Mammary epithelial cell (primary cell): ENCODE measurements at regions of chr9 and their contacts with region 1.

Region 1: GRCh38 chr9:136944519-136945279 is at the starts of genes C8G and FBXW5:
- DNase-seq: peak; percentile 90
- H3K4me3 ChIP-seq: peak within 1 kb of the TSS; percentile 68 to 83 (median 77)
- H3K27ac ChIP-seq: peak within 1 kb of the TSS; percentile 59
- H3K4me1 ChIP-seq: peaks cover 13% of the 10 kb centered on the region
- H3K27me3 ChIP-seq: no peaks in the 10 kb centered on the region
- CTCF ChIP-seq: peak; percentile 78 to 98
- total RNA-seq, gene C8G: 0.50 to 2.8 TPM
- total RNA-seq, gene FBXW5: 79.7 to 107 TPM

Region 2: DNA sequence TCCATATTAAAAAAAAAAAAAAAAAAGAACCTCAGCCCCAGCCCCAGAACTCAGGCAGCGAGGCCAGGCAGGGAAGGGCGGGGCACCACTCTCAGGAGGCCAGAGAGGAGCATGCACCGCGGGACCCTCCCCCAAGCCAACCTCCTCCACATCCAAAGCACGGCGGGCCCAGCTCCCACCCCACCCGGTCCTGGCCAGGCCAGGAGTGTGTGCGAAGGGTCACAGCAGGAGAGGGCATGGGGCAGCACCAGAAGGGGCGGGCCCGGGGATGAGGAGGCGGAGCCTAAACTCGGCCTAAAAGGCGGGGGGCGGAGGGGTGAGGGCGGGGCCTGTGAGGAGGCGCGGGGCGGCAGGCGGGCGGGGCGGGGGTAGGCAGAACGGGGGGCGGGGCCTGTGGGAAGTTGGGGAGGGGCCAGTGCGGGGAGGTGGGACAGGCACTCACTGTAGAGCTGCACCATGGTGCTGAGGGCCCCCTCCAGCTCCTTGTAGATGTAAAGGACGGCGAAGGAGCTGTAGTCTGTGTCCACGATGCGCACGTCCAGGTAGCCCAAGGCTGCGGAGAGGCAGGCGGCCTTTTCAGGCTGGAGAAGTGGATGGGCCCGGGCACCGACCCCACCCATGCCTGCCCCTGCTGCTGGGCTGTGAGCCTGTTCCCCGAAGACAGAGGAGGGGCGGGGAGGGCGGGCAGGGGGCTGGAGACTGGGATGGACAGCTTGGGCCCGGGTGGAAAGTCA is 181.6 kb before region 1 on chr9:
- CTCF ChIA-PET with region 1: no interaction called
- dilution Hi-C with region 1: no loop called
- in situ Hi-C with region 1: no loop called
- intact Hi-C with region 1: no loop called
- DNase-seq: no peak
- H3K4me3 ChIP-seq: no peak overlapping the region
- H3K27ac ChIP-seq: no peak overlapping the region
- H3K4me1 ChIP-seq: peaks cover 10% of the 10 kb centered on the region
- H3K27me3 ChIP-seq: peaks cover 2% of the 10 kb centered on the region
- CTCF ChIP-seq: no peak

Region 3: GRCh38 chr9:136849038-136849959 is 95.4 kb before region 1 on chr9 and contains the start of gene PHPT1:
- CTCF ChIA-PET with region 1: no interaction called
- dilution Hi-C with region 1: no loop called
- in situ Hi-C with region 1: no loop called
- intact Hi-C with region 1: loop called (anchors 2 kb)
- DNase-seq: peak; percentile 98
- H3K4me3 ChIP-seq: peak within 1 kb of the TSS; percentile 82 to 93 (median 92)
- H3K27ac ChIP-seq: peak within 1 kb of the TSS; percentile 67
- H3K4me1 ChIP-seq: peaks cover 19% of the 10 kb centered on the region
- H3K27me3 ChIP-seq: peaks cover 22% of the 10 kb centered on the region
- CTCF ChIP-seq: no peak
- total RNA-seq, gene PHPT1: 55.3 to 143 TPM

Region 4: GRCh38 chr9:136885950-136886578 is 58.6 kb before region 1 on chr9 and contains the start of gene TRAF2:
- CTCF ChIA-PET with region 1: no interaction called
- dilution Hi-C with region 1: no loop called
- in situ Hi-C with region 1: no loop called
- intact Hi-C with region 1: loop called (anchors 1 kb)
- DNase-seq: peak; percentile 100
- H3K4me3 ChIP-seq: peak within 1 kb of the TSS; percentile 55 to 83 (median 82)
- H3K27ac ChIP-seq: peak within 1 kb of the TSS; percentile 65
- H3K4me1 ChIP-seq: peaks cover 40% of the 10 kb centered on the region
- H3K27me3 ChIP-seq: no peaks in the 10 kb centered on the region
- CTCF ChIP-seq: no peak
- total RNA-seq, gene TRAF2: 8.3 to 27.8 TPM

Region 5: GRCh38 chr9:136928591-136928990 is 16.1 kb before region 1 on chr9:
- CTCF ChIA-PET with region 1: no interaction called
- dilution Hi-C with region 1: no loop called
- in situ Hi-C with region 1: no loop called
- intact Hi-C with region 1: no loop called
- DNase-seq: no peak
- H3K4me3 ChIP-seq: no peak overlapping the region
- H3K27ac ChIP-seq: no peak overlapping the region
- H3K4me1 ChIP-seq: no peaks in the 10 kb centered on the region
- H3K27me3 ChIP-seq: no peaks in the 10 kb centered on the region
- CTCF ChIP-seq: no peak

Region 6: GRCh38 chr9:137000177-137000883 is 55.6 kb after region 1 on chr9:
- CTCF ChIA-PET with region 1: interaction called, 4 read pairs
- dilution Hi-C with region 1: loop called (anchors 10 kb)
- in situ Hi-C with region 1: no loop called
- intact Hi-C with region 1: loop called (anchors 5 kb)
- DNase-seq: peak; percentile 52
- H3K4me3 ChIP-seq: no peak overlapping the region
- H3K27ac ChIP-seq: no peak overlapping the region
- H3K4me1 ChIP-seq: peaks cover 31% of the 10 kb centered on the region
- H3K27me3 ChIP-seq: no peaks in the 10 kb centered on the region
- CTCF ChIP-seq: no peak

Region 7: GRCh38 chr9:137017791-137018497 is 73.2 kb after region 1 on chr9:
- CTCF ChIA-PET with region 1: no interaction called
- dilution Hi-C with region 1: no loop called
- in situ Hi-C with region 1: no loop called
- intact Hi-C with region 1: no loop called
- DNase-seq: no peak
- H3K4me3 ChIP-seq: no peak overlapping the region
- H3K27ac ChIP-seq: no peak overlapping the region
- H3K4me1 ChIP-seq: no peaks in the 10 kb centered on the region
- H3K27me3 ChIP-seq: no peaks in the 10 kb centered on the region
- CTCF ChIP-seq: no peak